Posterior cingulate gyrus (tissue), 11 donors: ENCODE measurements at regions of chr3 and their contacts with region 1.

Region 1: DNA sequence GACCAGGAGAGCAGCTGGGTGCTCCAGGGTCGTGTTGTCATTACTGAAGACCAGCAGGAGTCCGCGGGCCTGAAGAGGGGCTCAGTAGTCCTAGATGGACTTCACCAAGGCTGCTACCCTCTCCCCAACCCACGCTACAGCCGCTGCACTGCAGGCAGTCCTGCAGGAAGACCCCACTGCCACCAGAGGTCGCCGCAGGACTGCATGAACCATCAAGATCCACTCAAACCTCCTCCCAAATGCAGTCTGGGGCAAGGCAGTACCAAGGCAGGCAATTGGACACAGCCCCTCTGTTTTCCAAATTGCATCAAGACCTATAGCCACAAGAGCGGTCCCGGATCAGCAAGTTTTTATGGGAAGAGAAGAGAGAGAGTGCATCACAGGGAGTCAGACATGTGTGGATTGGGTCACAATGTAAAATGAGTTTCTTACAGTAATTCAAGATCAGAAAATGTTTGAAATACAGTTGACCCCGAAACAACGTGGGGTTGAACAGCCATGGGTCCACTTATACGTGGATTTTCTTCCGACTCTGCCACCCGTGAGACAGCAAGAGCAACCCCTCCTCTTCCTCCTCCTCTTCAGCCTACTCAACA is 46.7 kb downstream of the DZIP1L start:
- DNase-seq: peak; percentile 43 to 96 (median 80)

Region 2: DNA sequence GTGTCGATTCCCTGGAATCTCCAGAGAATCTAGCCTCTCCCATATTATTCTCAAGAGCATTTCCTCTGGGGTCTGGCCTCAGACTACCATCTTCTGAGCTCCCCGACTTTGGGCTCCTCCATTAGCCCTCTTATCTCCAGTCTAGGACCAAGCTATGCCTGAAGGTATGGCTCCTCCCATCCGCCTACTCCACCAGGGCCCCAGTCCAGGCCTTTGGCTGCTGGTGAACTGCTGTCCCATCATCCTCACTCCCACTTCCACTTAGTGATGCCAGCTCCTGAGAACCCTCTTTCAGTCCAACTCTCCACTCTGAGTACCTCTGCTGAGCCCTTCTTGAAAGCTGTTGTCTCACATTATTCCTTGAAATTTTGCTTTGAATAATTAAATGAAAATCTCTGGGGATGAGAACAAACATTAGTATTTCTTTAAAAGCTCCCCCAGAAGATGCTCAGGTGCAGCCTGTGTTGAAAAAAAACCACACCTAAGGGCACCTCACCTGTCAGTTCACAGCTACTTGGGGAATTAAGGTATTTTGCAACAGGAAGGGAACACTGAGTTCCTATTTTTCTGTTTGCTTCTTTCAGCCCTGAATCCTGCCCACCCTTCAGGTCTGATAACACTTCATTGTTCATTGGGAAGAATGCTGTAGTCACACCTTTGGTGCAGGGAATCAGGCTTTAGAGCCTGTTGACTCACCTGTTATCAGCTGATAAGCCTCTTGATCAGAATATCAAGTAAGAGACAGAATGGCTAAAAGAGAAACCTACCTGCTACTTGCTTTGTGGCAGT is 49.2 kb before region 1 on chr3:
- intact Hi-C with region 1: no loop called
- DNase-seq: no peak

Region 3: DNA sequence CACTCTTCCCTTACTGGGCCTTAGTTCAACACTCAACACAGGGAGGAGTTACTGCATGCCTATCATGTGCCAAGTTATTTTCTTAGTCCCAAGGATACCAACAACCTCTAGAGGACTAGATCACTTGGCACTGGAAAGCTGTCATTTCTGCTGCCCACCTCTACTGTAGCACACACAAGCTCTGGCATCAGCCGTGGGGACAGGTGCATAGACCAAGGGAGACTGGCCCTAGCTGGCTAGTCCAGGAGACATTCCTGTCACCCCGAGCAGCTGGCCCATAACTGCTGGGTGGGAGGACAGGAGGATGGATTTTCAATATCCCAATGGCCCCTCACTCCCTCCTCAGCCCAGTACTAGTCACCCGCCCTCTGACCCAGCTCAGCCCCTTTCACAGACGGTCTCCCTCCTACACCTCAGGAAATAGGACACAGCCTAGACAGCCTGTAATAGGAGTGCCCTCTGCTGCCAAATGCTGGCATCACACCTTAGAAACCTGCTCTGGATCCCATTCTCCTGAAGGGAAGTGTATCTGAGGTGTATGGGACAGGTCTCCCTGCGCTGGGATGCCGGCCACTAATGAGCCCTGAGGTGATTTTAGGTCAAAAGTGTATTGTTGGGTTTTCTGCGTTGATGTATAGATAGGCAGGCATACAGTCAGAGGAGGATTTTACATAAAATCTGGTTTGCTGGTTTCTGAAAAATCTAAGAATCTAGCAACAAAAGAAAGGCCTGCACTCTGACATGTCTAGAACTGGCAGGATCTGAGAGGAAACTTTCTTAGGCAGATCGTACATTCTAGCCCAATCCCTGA is 50.1 kb after region 1 on chr3:
- intact Hi-C with region 1: loop called (anchors 2 kb)
- DNase-seq: peak in 9 of 10 donors; percentile 39 to 95 (median 71)

Region 4: GRCh38 chr3:138426226-138426625 is 357.5 kb after region 1 on chr3:
- intact Hi-C with region 1: loop called (anchors 10 kb)
- DNase-seq: no peak